GM12878 (cell line): ENCODE measurements at regions of chr2 and their contacts with region 1.

Region 1: GRCh38 chr2:231674587-231675338 is 33.6 kb upstream of the PTMA start:
- DNase-seq: no peak
- ATAC-seq: peak; percentile 52
- H3K4me3 ChIP-seq: no peak overlapping the region
- H3K27ac ChIP-seq: peak overlapping the region; percentile 87
- H3K4me1 ChIP-seq: peaks cover 63% of the 10 kb centered on the region
- H3K27me3 ChIP-seq: no peaks in the 10 kb centered on the region
- CTCF ChIP-seq: peak; percentile 85 to 93 (median 87)
- EP300 ChIP-seq: 0 out of 4 replicates have a peak, but pooled peaks of 1 of the 2 experiments have one; percentile 20
- POLR2A ChIP-seq: no peak; the same call in 1 of the 2 replicates
- RAD21 ChIP-seq: peak; percentile 82

Region 2: GRCh38 chr2:231563378-231563961 is 111.3 kb before region 1 on chr2:
- CTCF ChIA-PET with region 1: interaction called, 20 read pairs
- POLR2A ChIA-PET with region 1: no interaction called
- RAD21 ChIA-PET with region 1: interaction called, 8 read pairs
- SMC1A ChIA-PET with region 1: interaction called, 5 read pairs
- in situ Hi-C with region 1: no loop called
- intact Hi-C with region 1: loop called (anchors 5 kb)
- DNase-seq: no peak
- ATAC-seq: peak; percentile 99
- H3K4me3 ChIP-seq: no peak overlapping the region
- H3K27ac ChIP-seq: no peak overlapping the region
- H3K4me1 ChIP-seq: no peaks in the 10 kb centered on the region; the same call in 1 of the 2 replicates
- H3K27me3 ChIP-seq: no peaks in the 10 kb centered on the region
- CTCF ChIP-seq: peak; percentile 59 to 89 (median 85); a peak in 5 of 6 replicates
- EP300 ChIP-seq: no peak
- POLR2A ChIP-seq: no peak
- RAD21 ChIP-seq: peak; percentile 83

Region 3: GRCh38 chr2:231621129-231621879 is 53.5 kb before region 1 on chr2:
- CTCF ChIA-PET with region 1: interaction called, 15 read pairs
- POLR2A ChIA-PET with region 1: interaction called, 8 read pairs
- RAD21 ChIA-PET with region 1: interaction called, 7 read pairs
- SMC1A ChIA-PET with region 1: interaction called, 255 read pairs
- in situ Hi-C with region 1: no loop called
- intact Hi-C with region 1: no loop called
- DNase-seq: no peak
- ATAC-seq: 0 out of 3 replicates have a peak, but pooled peaks have one; percentile 26
- H3K4me3 ChIP-seq: no peak overlapping the region
- H3K27ac ChIP-seq: no peak overlapping the region
- H3K4me1 ChIP-seq: no peaks in the 10 kb centered on the region; the same call in 1 of the 2 replicates
- H3K27me3 ChIP-seq: no peaks in the 10 kb centered on the region; a peak in 1 of 4 replicates
- CTCF ChIP-seq: no peak
- EP300 ChIP-seq: no peak
- POLR2A ChIP-seq: no peak
- RAD21 ChIP-seq: no peak

Region 4: DNA sequence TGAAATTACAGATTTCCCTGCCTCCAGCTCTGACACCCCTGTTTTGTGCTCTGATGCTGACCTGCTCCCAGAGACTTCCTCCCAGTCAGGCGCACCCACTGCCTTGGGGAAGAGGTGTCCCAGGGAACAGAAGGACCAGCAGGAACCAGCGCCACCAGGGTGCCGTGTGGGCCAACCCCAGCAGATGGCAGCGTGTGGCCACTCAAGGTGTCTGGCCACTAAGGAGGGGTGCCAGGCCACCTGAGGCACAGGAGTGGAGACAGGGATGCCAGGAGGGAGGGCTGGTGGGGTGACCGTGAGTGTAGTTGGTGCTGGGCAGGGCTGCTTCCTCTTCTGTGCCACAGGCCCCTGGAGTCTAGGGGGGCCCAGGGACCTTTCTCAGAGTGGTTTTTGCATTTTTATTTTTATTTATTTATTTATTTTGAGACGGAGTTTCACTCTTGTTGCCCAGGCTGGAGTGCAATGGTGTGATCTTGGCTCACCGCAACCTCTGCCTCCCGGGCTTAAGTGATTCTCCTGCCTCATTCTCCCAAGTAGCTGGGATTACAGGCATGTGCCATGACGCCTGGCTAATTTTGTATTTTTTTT is 26.1 kb before region 1 on chr2:
- CTCF ChIA-PET with region 1: interaction called, 262 read pairs
- POLR2A ChIA-PET with region 1: interaction called, 5 read pairs
- RAD21 ChIA-PET with region 1: interaction called, 86 read pairs
- SMC1A ChIA-PET with region 1: interaction called, 102 read pairs
- in situ Hi-C with region 1: no loop called
- intact Hi-C with region 1: loop called (anchors 1 kb)
- DNase-seq: no peak
- ATAC-seq: peak; percentile 100
- H3K4me3 ChIP-seq: no peak overlapping the region
- H3K27ac ChIP-seq: no peak overlapping the region
- H3K4me1 ChIP-seq: no peaks in the 10 kb centered on the region
- H3K27me3 ChIP-seq: no peaks in the 10 kb centered on the region
- CTCF ChIP-seq: peak; percentile 64 to 85 (median 74)
- EP300 ChIP-seq: no peak
- POLR2A ChIP-seq: no peak
- RAD21 ChIP-seq: peak; percentile 81

Region 5: GRCh38 chr2:231687133-231687852 is 12.5 kb after region 1 on chr2:
- CTCF ChIA-PET with region 1: interaction called, 24 read pairs
- POLR2A ChIA-PET with region 1: interaction called, 6 read pairs
- RAD21 ChIA-PET with region 1: interaction called, 7 read pairs
- SMC1A ChIA-PET with region 1: interaction called, 6 read pairs
- in situ Hi-C with region 1: no loop called
- intact Hi-C with region 1: no loop called
- DNase-seq: no peak
- ATAC-seq: peak; percentile 97
- H3K4me3 ChIP-seq: peak overlapping the region; percentile 28; the same call in 1 of the 2 replicates
- H3K27ac ChIP-seq: peak overlapping the region; percentile 38; the same call in 1 of the 2 replicates
- H3K4me1 ChIP-seq: peaks cover 4% of the 10 kb centered on the region
- H3K27me3 ChIP-seq: no peaks in the 10 kb centered on the region
- CTCF ChIP-seq: peak; percentile 88 to 94 (median 90)
- EP300 ChIP-seq: no peak
- POLR2A ChIP-seq: peak; percentile 57
- RAD21 ChIP-seq: peak; percentile 65

Region 6: DNA sequence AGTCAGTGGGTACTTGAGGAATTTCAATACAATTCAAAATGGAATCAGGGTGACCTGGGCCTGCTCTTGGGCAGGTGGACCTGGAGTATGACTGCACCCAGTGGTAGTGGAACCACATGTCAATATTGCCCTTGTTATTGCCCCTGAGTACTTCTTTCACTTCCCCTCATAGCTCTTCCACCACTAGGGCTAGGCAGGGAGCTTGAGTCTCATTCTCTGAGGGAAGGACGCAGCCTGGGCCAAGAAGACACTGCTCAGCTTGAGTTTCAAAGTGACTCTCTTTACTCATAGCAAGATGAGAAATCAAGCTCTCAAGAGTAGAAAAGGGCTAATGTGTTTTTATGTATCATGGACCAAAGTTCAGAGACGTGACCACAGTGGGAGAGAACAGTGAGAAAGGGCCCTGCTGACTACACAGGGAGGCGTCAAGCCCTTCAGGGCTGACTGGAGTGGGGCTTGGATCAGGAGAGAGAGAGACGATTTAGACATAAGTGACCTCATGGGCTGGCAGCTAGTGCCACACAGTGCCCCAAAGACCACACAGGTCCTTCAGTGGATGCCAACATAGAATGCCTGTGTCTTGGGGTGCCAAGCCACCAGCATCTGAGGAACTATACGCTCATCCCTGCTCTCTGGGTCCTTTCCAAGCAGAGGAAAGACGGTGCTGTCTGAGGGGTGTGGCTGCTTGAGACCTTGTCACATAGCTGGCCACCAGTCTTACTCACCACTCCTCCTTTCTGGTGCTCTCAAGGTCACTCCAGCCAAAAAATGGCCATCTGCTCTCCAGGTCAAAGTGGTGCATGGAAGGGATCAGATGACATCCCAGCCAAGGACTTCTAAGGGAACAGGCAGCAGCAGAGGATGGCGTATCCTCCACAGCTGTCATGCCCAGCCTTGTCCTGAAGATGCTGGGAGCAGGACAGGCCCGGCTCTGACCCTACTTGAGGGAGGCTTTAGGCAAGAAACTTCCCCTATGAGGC is 46.5 kb after region 1 on chr2:
- CTCF ChIA-PET with region 1: interaction called, 811 read pairs
- POLR2A ChIA-PET with region 1: interaction called, 102 read pairs
- RAD21 ChIA-PET with region 1: interaction called, 463 read pairs
- SMC1A ChIA-PET with region 1: interaction called, 343 read pairs
- in situ Hi-C with region 1: loop called (anchors 5 kb)
- intact Hi-C with region 1: no loop called
- DNase-seq: peak; percentile 80
- ATAC-seq: peak; percentile 93
- H3K4me3 ChIP-seq: no peak overlapping the region
- H3K27ac ChIP-seq: peak overlapping the region; percentile 71
- H3K4me1 ChIP-seq: peaks cover 26% of the 10 kb centered on the region
- H3K27me3 ChIP-seq: no peaks in the 10 kb centered on the region
- CTCF ChIP-seq: peak; percentile 23 to 43 (median 28); a peak in 4 of 6 replicates
- EP300 ChIP-seq: peak in 1 of 2 experiments; percentile 52; a peak in 1 of 4 replicates
- POLR2A ChIP-seq: peak; percentile 39; the same call in 1 of the 2 replicates
- RAD21 ChIP-seq: 0 out of 2 replicates have a peak, but pooled peaks have one; percentile 42